Activated CD8-positive, alpha-beta memory T cell treated with anti-CD3 and anti-CD28 coated beads, Interleukin-2, amount 10 ng/mL, durations not matched to agents 7 days and 5 days (primary cell): ENCODE measurements at regions of chr7 and their contacts with region 1.

Region 1: GRCh38 chr7:102425639-102426267 is 7.6 kb upstream of the ORAI2 start:
- DNase-seq: peak; percentile 93
- ATAC-seq: peak; percentile 87
- H3K4me3 Mint-ChIP-seq: peak overlapping the region; percentile 77
- H3K27ac Mint-ChIP-seq: peak overlapping the region; percentile 99
- H3K4me1 Mint-ChIP-seq: peaks cover 65% of the 10 kb centered on the region
- H3K27me3 Mint-ChIP-seq: no peaks in the 10 kb centered on the region

Region 2: DNA sequence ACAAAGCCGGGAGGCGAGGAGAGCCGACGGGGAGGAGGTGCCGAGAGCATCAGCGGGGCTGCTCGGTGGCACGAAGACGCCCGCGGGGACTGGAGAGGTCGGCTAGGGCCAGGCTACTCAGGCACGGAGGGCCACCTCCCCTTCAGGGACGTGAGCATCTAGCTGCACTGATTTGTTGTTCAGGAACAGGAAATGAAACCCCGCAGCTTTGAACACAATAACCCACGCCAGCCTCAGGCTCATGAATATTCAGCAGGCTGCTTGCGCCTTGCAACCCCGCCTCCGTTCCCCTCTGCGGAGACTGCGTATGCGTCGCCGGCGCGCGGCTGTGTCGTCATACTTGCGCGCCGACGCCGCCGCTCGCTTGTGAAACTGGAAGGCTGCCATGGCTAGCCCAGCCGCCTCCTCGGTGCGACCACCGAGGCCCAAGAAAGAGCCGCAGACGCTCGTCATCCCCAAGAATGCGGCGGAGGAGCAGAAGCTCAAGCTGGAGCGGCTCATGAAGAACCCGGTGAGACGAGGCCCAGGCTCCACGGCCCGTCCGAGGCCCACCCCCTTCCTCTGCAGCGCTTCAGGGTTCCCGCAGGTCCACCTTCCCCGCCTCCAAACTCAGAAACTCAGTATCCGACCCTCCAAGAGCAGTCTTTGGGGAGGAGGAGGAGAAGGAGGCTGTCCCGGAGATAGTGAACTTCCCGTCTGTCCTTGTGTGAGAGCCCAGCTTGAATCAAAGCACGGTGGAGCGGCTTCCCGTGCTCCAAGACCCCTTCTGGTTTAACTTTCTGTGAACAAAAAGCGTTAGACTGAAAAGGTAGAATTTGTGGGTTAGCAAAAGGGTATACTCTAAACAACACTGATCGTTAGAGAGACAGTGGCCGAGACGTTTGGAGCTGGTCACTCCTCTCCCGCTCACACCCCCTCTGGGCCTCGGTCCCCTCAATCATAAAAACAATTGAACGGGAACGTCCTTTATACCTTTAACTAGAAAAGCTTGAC is 29.4 kb before region 1 on chr7 and contains the start of gene PRKRIP1:
- CTCF ChIA-PET with region 1: interaction called, 10 read pairs
- DNase-seq: peak; percentile 95
- ATAC-seq: peak; percentile 98
- H3K4me3 Mint-ChIP-seq: peak within 1 kb of the TSS; percentile 86
- H3K27ac Mint-ChIP-seq: peak within 1 kb of the TSS; percentile 90
- H3K4me1 Mint-ChIP-seq: peaks cover 17% of the 10 kb centered on the region
- H3K27me3 Mint-ChIP-seq: no peaks in the 10 kb centered on the region
- total RNA-seq, gene PRKRIP1: 22.2 to 34.5 TPM

Region 3: GRCh38 chr7:102891693-102892261 is 466.0 kb after region 1 on chr7:
- CTCF ChIA-PET with region 1: no interaction called
- DNase-seq: no peak
- ATAC-seq: no peak
- H3K4me3 Mint-ChIP-seq: no peak overlapping the region
- H3K27ac Mint-ChIP-seq: no peak overlapping the region
- H3K4me1 Mint-ChIP-seq: no peaks in the 10 kb centered on the region
- H3K27me3 Mint-ChIP-seq: peaks cover 10% of the 10 kb centered on the region